Activated B cell treated with CpG ODN at 0.5 μM for 24 hours (primary cell): ENCODE measurements at regions of chr15 and their contacts with region 1.

Region 1: DNA sequence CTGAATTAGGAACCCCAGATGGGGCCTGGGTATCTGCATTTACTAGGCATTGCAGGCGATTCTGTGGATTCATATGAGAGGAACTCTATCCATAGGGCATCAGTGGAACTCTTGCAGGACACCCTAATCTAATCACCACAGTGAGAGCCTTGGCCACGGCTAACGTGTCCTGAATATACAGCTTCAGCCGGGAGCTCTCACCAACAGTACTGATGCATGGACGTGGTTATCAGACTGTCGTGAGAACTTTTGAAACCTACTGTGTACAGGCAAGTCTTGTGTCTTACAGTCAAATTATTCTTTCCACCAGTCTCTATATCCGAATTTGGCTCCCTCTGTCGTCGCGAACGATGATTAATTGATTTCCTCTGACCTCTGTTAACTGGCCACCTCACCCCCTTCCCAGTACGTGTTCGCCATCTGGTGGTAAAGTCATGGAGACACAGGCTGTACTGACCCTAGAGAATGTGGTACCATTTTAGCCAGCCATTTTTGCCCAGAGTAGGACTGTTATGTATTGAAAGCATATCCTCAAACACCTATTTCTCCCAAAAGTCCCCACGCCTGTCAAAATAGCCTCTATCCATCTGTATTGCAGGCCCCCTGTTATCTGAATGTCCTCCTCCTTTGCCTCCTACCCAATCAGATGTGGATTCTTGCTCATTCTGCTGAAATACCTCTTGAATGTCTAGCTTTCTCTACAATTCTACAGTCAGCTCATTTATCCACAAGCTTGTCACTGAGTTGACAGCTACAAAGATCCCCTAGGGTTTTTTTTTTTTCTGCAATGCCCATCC is 39.7 kb downstream of the GLDN start:
- DNase-seq: no peak
- ATAC-seq: peak; percentile 81
- H3K4me3 Mint-ChIP-seq: no peak overlapping the region
- H3K27ac Mint-ChIP-seq: no peak overlapping the region
- H3K4me1 Mint-ChIP-seq: no peaks in the 10 kb centered on the region
- H3K27me3 Mint-ChIP-seq: peaks cover 9% of the 10 kb centered on the region
- CTCF ChIP-seq: no peak

Region 2: DNA sequence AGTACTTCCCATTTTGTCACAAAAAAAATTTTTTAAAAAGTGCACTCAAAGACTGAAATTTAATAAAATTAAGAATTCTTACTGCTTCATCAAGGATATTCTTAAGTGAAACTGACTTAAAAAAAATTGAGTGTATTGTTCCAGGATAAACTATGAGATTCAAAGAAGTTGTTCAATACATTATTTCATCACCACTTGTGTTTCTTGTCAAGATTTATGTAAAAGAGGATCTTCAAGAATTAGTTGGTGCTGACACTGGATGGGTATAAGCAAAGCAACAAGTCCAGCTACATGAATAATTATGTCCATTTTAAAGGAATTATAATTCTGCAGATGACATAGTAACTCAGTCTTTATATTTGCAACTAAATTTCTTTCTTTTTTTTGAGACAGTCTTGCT is 477.0 kb before region 1 on chr15:
- CTCF ChIA-PET with region 1: no interaction called
- POLR2A ChIA-PET with region 1: no interaction called
- intact Hi-C with region 1: no loop called
- DNase-seq: no peak
- ATAC-seq: no peak
- H3K4me3 Mint-ChIP-seq: no peak overlapping the region
- H3K27ac Mint-ChIP-seq: no peak overlapping the region
- H3K4me1 Mint-ChIP-seq: peaks cover 15% of the 10 kb centered on the region
- H3K27me3 Mint-ChIP-seq: no peaks in the 10 kb centered on the region
- CTCF ChIP-seq: no peak

Region 3: DNA sequence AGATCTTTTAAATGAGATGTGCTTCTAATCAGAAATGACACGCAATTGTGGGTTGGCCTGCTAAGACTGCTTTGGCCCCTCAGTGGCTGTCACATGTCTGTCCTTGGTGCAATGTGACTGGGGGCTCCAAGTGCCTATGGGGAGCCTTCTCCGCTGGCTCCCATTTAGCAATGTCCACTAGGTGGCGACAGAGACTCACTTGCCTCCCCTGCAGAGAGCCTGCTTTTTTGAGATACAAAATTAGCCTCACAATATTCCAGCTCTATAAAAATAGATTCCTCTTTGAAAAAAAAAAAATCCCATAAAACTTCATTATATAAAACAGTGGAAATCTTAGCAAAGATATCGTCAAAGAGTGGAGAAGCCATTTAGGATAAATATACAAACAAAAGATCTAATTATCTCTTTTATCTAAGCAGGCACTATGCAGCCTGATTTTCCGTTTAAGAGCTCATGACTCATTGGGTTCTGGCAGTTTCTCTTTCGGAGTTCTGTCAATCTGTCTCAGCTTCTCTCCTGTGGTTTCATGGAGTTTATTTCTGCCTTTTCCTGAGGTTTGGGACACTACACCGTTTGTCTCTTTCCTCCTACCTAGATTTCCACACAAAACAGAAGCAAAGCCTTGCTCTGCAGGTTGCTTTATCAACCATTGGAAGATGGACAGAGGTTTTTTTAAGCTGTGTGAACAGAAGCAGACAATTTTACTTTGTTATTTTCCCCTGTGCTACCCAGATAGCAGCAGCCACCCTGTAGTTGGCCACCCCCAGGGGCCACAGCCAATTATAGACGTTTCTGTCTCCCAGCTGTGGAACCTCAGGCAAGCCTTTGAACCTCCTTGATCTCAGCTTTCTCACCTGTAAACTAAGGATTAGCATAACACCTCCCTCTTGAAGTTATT is 218.1 kb before region 1 on chr15:
- CTCF ChIA-PET with region 1: interaction called, 43 read pairs
- POLR2A ChIA-PET with region 1: no interaction called
- intact Hi-C with region 1: loop called (anchors 1 kb)
- DNase-seq: peak; percentile 29
- ATAC-seq: peak; percentile 67
- H3K4me3 Mint-ChIP-seq: no peak overlapping the region
- H3K27ac Mint-ChIP-seq: no peak overlapping the region
- H3K4me1 Mint-ChIP-seq: peaks cover 4% of the 10 kb centered on the region
- H3K27me3 Mint-ChIP-seq: peaks cover 9% of the 10 kb centered on the region
- CTCF ChIP-seq: peak; percentile 89

Region 4: DNA sequence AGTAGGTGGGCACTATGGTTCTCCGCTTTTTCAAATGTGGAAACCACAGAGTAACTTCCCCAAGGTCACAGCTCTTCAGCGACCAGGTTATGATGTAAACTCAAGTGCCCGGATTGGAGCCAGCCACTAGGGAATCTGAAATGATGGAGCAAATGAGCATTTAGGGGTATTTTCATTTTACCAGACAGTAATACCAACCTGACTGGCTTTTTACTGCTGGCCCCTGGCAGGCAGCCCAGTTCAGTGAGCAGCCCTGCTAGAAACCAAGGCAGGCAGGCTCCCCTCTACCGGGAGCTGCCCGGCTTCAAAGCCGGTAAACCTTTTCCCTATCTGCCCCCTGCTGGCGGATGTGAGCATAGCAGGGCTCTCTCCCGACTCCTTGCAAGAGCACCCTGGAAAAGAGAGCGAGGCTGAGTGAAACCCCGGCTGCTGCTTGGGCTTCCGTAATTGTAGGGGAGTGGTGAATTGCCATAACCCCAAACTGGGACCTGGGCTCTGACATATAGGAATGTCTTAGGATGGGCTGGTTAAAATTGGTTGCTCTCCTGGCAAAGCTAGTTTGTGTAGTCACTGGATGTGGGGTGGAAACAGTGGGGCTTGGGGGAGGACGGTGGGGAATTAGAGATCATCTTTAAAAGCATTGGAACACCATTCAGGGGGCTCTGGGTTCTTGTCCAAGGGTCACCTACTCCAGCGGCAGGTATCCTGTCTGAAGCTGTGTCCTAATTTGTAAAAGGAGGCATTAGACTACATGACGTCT is 188.5 kb before region 1 on chr15:
- CTCF ChIA-PET with region 1: no interaction called
- POLR2A ChIA-PET with region 1: no interaction called
- intact Hi-C with region 1: loop called (anchors 1 kb)
- DNase-seq: peak; percentile 57
- ATAC-seq: peak; percentile 49
- H3K4me3 Mint-ChIP-seq: no peak overlapping the region
- H3K27ac Mint-ChIP-seq: no peak overlapping the region
- H3K4me1 Mint-ChIP-seq: no peaks in the 10 kb centered on the region
- H3K27me3 Mint-ChIP-seq: peaks cover 37% of the 10 kb centered on the region
- CTCF ChIP-seq: peak; percentile 78

Region 5: GRCh38 chr15:51229907-51230330 is 151.3 kb before region 1 on chr15:
- CTCF ChIA-PET with region 1: interaction called, 3 read pairs
- POLR2A ChIA-PET with region 1: no interaction called
- intact Hi-C with region 1: loop called (anchors 1 kb)
- DNase-seq: no peak
- ATAC-seq: no peak
- H3K4me3 Mint-ChIP-seq: no peak overlapping the region
- H3K27ac Mint-ChIP-seq: no peak overlapping the region
- H3K4me1 Mint-ChIP-seq: peaks cover 7% of the 10 kb centered on the region
- H3K27me3 Mint-ChIP-seq: peaks cover 3% of the 10 kb centered on the region
- CTCF ChIP-seq: no peak

Region 6: GRCh38 chr15:51281368-51281967 is 99.7 kb before region 1 on chr15:
- CTCF ChIA-PET with region 1: interaction called, 6 read pairs
- POLR2A ChIA-PET with region 1: no interaction called
- intact Hi-C with region 1: loop called (anchors 1 kb)
- DNase-seq: no peak
- ATAC-seq: no peak
- H3K4me3 Mint-ChIP-seq: no peak overlapping the region
- H3K27ac Mint-ChIP-seq: no peak overlapping the region
- H3K4me1 Mint-ChIP-seq: peaks cover 14% of the 10 kb centered on the region
- H3K27me3 Mint-ChIP-seq: peaks cover 16% of the 10 kb centered on the region
- CTCF ChIP-seq: no peak

Region 7: DNA sequence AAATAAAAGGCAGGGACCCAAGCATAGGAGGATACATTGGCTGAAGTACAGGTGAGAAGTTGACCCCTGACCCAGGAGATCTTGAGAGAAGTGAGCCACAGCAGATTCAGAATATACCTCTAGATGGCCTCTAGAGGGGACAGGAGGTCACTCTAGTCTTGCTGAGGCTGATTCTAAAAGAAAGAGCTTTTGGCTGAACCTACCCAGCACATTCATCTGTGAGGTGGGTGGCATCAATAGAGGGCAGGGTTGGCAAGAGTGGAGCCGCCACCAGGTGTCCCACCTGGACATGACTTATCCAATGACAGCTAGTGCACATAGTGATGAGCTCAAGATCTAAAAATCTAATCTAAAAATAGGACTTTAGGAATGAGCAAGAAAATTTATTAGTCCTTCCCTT is 94.4 kb before region 1 on chr15:
- CTCF ChIA-PET with region 1: interaction called, 6 read pairs
- POLR2A ChIA-PET with region 1: no interaction called
- intact Hi-C with region 1: loop called (anchors 1 kb)
- DNase-seq: no peak
- ATAC-seq: no peak
- H3K4me3 Mint-ChIP-seq: no peak overlapping the region
- H3K27ac Mint-ChIP-seq: no peak overlapping the region
- H3K4me1 Mint-ChIP-seq: peaks cover 14% of the 10 kb centered on the region
- H3K27me3 Mint-ChIP-seq: peaks cover 12% of the 10 kb centered on the region
- CTCF ChIP-seq: no peak

Region 8: DNA sequence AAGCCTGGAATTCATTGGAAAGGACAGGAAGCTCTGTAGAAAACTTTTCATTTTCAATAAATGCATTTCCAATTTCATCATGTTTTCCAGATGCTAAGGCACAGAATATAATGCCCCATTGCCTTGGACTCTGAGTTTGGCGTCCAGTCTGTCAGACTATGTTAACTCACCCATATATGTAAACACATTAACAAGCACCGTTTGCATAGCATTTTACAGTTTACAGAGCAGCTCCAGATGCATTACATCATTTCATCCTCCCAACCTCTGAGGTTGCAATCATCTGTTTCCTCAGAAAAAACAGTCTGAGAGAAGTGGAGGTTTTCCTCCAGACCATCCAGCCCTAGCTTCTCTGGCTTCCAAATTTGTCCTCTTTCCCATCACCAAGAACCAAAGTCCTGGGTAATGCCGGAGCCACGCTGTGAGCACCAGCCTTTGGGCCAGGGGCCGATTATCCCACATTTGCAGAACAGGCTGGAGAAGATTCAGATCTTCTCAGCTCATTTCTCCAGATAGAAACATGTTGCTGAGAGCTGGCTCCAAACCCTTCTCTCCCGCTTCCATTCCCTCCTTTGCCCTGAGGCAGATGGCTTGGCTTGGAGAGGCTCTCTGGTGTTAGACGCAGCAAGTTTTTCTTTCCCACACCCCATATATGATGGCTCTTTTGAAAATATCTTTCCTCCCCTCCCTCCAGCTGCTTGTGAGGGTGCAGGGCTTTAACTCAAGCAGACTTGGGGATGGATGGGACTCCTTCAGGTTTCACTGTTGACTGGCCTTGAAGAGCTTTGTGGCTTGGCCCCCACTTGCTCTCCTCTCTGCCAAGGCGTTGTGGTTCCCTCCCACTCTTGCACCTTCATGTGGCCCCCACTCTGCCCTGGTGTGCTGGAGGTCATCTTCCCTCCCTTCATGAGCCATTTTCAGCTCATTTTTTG is 68.8 kb before region 1 on chr15:
- CTCF ChIA-PET with region 1: no interaction called
- POLR2A ChIA-PET with region 1: no interaction called
- intact Hi-C with region 1: no loop called
- DNase-seq: no peak
- ATAC-seq: no peak
- H3K4me3 Mint-ChIP-seq: no peak overlapping the region
- H3K27ac Mint-ChIP-seq: no peak overlapping the region
- H3K4me1 Mint-ChIP-seq: no peaks in the 10 kb centered on the region
- H3K27me3 Mint-ChIP-seq: peaks cover 4% of the 10 kb centered on the region
- CTCF ChIP-seq: no peak

Region 9: GRCh38 chr15:51533672-51534398 is 152.6 kb after region 1 on chr15:
- CTCF ChIA-PET with region 1: no interaction called
- POLR2A ChIA-PET with region 1: no interaction called
- intact Hi-C with region 1: no loop called
- DNase-seq: no peak
- ATAC-seq: no peak
- H3K4me3 Mint-ChIP-seq: no peak overlapping the region
- H3K27ac Mint-ChIP-seq: no peak overlapping the region
- H3K4me1 Mint-ChIP-seq: no peaks in the 10 kb centered on the region
- H3K27me3 Mint-ChIP-seq: no peaks in the 10 kb centered on the region
- CTCF ChIP-seq: no peak